Activated naive CD4-positive, alpha-beta T cell treated with anti-CD3 and anti-CD28 coated beads for 36 hours (primary cell): ENCODE measurements at regions of chr3 and their contacts with region 1.

Region 1: DNA sequence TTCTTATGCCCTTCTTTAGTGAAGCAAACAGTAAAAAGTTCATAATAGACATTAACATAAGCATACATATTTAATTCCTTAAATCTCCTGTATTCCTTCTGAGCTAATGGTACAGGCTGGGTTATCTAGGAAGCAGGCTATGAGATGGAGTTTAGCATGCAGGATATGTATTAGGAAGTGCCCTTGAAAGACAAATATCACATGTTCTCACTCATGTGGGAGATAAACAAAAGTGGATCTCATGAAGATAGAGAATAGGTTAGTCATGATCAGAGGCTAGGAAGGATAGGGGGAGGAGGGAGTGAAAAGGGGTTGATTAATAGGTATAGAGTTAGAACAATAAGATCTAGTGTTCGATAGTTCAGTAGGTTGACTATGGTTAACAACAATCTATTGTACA is 105.4 kb downstream of the CLASP2 start:
- DNase-seq: no peak
- H3K4me3 Mint-ChIP-seq: no peak overlapping the region
- H3K27ac Mint-ChIP-seq: no peak overlapping the region
- H3K4me1 Mint-ChIP-seq: no peaks in the 10 kb centered on the region
- H3K27me3 Mint-ChIP-seq: no peaks in the 10 kb centered on the region

Region 2: DNA sequence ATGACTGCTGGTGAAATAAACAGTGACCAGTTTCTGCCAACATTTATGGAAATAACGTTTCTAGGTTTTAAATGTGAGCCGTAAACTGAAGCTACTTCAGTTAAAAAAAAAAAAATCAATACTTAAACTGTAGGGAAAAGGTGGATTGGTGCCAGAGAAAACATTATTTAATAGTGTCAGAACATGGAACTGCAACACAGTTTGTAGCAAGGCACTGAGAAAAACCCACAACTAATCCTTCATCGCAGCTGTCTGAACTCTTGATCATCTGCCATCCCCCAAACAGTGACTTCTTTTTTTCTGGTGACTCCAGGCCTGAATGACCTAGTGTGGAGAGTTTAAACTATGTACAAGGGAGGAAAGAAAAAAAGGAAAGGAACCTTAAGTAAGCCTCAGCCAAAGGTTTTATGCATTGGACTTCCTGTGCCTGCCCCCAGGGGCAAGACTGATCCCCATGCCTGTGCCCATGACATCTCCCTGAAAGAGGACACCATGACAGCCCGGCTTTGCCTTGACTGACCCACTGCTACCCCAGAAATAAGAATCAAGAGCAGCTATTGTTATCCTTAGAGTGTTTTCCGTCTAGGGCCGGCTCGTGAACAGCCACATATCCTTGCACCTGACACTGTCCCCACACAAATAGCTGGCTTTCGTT is 465.7 kb before region 1 on chr3:
- CTCF ChIA-PET with region 1: no interaction called
- intact Hi-C with region 1: no loop called
- DNase-seq: no peak
- H3K4me3 Mint-ChIP-seq: no peak overlapping the region
- H3K27ac Mint-ChIP-seq: no peak overlapping the region
- H3K4me1 Mint-ChIP-seq: no peaks in the 10 kb centered on the region
- H3K27me3 Mint-ChIP-seq: peaks cover 2% of the 10 kb centered on the region

Region 3: DNA sequence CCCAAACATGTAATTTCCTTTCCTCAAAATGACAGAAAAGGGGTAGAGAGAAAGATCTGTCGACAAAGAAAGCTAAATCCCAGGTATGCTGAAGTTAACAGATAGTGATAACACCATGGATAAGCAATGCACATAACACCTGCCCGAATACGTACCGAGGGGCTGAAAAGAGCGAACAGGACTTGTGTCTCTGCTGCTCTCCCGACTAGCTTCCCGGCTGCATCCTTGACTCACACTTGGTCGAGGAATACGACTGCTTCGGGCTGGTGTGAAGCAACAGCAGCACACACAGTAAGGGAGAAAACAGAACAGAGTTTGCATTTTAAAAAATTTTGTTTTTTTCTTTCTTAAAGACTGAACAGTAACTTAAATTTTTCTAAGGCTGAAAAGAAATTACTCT is 30.9 kb before region 1 on chr3:
- CTCF ChIA-PET with region 1: interaction called, 10 read pairs
- intact Hi-C with region 1: no loop called
- DNase-seq: no peak
- H3K4me3 Mint-ChIP-seq: no peak overlapping the region
- H3K27ac Mint-ChIP-seq: no peak overlapping the region
- H3K4me1 Mint-ChIP-seq: peaks cover 3% of the 10 kb centered on the region
- H3K27me3 Mint-ChIP-seq: no peaks in the 10 kb centered on the region

Region 4: GRCh38 chr3:34183611-34184313 is 571.2 kb after region 1 on chr3:
- CTCF ChIA-PET with region 1: no interaction called
- intact Hi-C with region 1: no loop called
- DNase-seq: no peak
- H3K4me3 Mint-ChIP-seq: no peak overlapping the region
- H3K27ac Mint-ChIP-seq: no peak overlapping the region
- H3K4me1 Mint-ChIP-seq: peaks cover 7% of the 10 kb centered on the region
- H3K27me3 Mint-ChIP-seq: peaks cover 7% of the 10 kb centered on the region